ENCODE measurements at regions of chr1 and their contacts with region 1.

Region 1: DNA sequence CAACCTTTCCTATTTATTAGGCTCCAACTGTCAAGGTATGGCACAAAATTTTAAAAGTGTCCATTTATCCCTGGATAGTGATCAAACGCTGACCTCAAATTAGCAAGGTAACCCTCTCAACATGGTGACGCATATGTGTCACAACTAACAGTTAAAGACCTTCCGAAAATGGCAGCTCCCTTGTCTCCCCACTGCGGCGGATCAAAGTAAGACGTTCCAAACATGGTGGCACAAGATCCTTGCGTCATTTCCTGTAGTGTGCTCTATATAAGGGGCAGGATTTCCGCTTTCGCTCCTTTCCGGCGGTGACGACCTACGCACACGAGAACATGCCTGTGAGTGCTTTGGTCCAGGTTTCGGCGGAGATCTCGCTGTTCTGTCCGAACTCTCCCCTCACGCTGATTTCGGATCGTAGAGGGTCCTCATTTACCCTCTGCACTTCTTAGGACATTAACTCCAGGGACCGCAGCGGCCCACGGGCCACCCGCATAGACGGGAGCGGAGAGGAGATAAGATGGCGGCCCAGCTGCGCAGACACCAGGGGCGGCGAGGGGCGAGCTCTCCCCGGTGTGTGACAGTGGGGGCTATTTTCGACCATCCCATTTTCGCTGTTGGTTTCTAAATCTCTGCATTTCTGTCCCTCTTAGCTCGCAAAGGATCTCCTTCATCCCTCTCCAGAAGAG is at the start of gene RPS27:
- DNase-seq: peak; percentile 77 to 96 (median 92)
- H3K4me3 ChIP-seq: peak within 1 kb of the TSS; percentile 79
- H3K4me3 Mint-ChIP-seq: peak within 1 kb of the TSS; percentile 91 to 100 (median 97)
- H3K27ac ChIP-seq: peak within 1 kb of the TSS; percentile 96
- H3K27ac Mint-ChIP-seq: peak within 1 kb of the TSS; percentile 93 to 100 (median 100)
- H3K4me1 ChIP-seq: peaks cover 42% of the 10 kb centered on the region
- H3K4me1 Mint-ChIP-seq: peaks cover 36 to 61% (median 53%) of the 10 kb centered on the region in 3 donors
- H3K27me3 ChIP-seq: no peaks in the 10 kb centered on the region
- H3K27me3 Mint-ChIP-seq: peaks cover 8% of the 10 kb centered on the region in 2 donors
- total RNA-seq, gene RPS27: 1,959 to 2,149 TPM

Region 2: GRCh38 chr1:153805042-153805745 is 185.4 kb before region 1 on chr1:
- CTCF ChIA-PET with region 1: interaction called, 35 read pairs
- POLR2A ChIA-PET with region 1: interaction called, 4 read pairs
- DNase-seq: peak; percentile 50 to 92 (median 83)
- H3K4me3 ChIP-seq: no peak overlapping the region
- H3K4me3 Mint-ChIP-seq: peak overlapping the region; percentile 2 to 64 (median 41)
- H3K27ac ChIP-seq: peak overlapping the region; percentile 74
- H3K27ac Mint-ChIP-seq: peak overlapping the region; percentile 66 to 96 (median 86)
- H3K4me1 ChIP-seq: peaks cover 22% of the 10 kb centered on the region
- H3K4me1 Mint-ChIP-seq: peaks cover 40 to 50% (median 41%) of the 10 kb centered on the region in 3 donors
- H3K27me3 ChIP-seq: no peaks in the 10 kb centered on the region
- H3K27me3 Mint-ChIP-seq: no peaks in the 10 kb centered on the region

Region 3: GRCh38 chr1:153922972-153923925 is 67.4 kb before region 1 on chr1 and contains the start of gene GATAD2B:
- CTCF ChIA-PET with region 1: interaction called, 4 read pairs
- POLR2A ChIA-PET with region 1: interaction called, 23 read pairs
- DNase-seq: peak; percentile 97 to 100 (median 99)
- H3K4me3 ChIP-seq: peak within 1 kb of the TSS; percentile 98
- H3K4me3 Mint-ChIP-seq: peak within 1 kb of the TSS; percentile 79 to 97 (median 94)
- H3K27ac ChIP-seq: peak within 1 kb of the TSS; percentile 96
- H3K27ac Mint-ChIP-seq: peak within 1 kb of the TSS; percentile 95 to 100 (median 98)
- H3K4me1 ChIP-seq: peaks cover 44% of the 10 kb centered on the region
- H3K4me1 Mint-ChIP-seq: peaks cover 46 to 60% (median 52%) of the 10 kb centered on the region in 3 donors
- H3K27me3 ChIP-seq: no peaks in the 10 kb centered on the region
- H3K27me3 Mint-ChIP-seq: peaks cover 0 to 4% of the 10 kb centered on the region in 2 donors
- total RNA-seq, gene GATAD2B: 64.9 to 71.9 TPM

Region 4: GRCh38 chr1:153958111-153958960 is 32.3 kb before region 1 on chr1 and contains the start of gene CRTC2:
- CTCF ChIA-PET with region 1: interaction called, 6 read pairs
- POLR2A ChIA-PET with region 1: interaction called, 14 read pairs
- DNase-seq: peak; percentile 95 to 98 (median 95)
- H3K4me3 ChIP-seq: peak within 1 kb of the TSS; percentile 74
- H3K4me3 Mint-ChIP-seq: peak within 1 kb of the TSS; percentile 93 to 99 (median 98)
- H3K27ac ChIP-seq: peak within 1 kb of the TSS; percentile 78
- H3K27ac Mint-ChIP-seq: peak within 1 kb of the TSS; percentile 61 to 98 (median 98)
- H3K4me1 ChIP-seq: peaks cover 52% of the 10 kb centered on the region
- H3K4me1 Mint-ChIP-seq: peaks cover 51 to 70% (median 57%) of the 10 kb centered on the region in 3 donors
- H3K27me3 ChIP-seq: no peaks in the 10 kb centered on the region
- H3K27me3 Mint-ChIP-seq: no peaks in the 10 kb centered on the region
- total RNA-seq, gene CRTC2: 53.9 to 63.2 TPM

Region 5: GRCh38 chr1:153977250-153978240 is 13.1 kb before region 1 on chr1 and contains the start of gene JTB:
- CTCF ChIA-PET with region 1: interaction called, 40 read pairs
- POLR2A ChIA-PET with region 1: interaction called, 40 read pairs
- DNase-seq: peak; percentile 74 to 90 (median 81)
- H3K4me3 ChIP-seq: peak within 1 kb of the TSS; percentile 93
- H3K4me3 Mint-ChIP-seq: peak within 1 kb of the TSS; percentile 91 to 99 (median 98)
- H3K27ac ChIP-seq: peak within 1 kb of the TSS; percentile 88
- H3K27ac Mint-ChIP-seq: peak within 1 kb of the TSS; percentile 88 to 100 (median 96)
- H3K4me1 ChIP-seq: peaks cover 18% of the 10 kb centered on the region
- H3K4me1 Mint-ChIP-seq: peaks cover 28 to 39% (median 30%) of the 10 kb centered on the region in 3 donors
- H3K27me3 ChIP-seq: no peaks in the 10 kb centered on the region
- H3K27me3 Mint-ChIP-seq: peaks cover 0 to 1% of the 10 kb centered on the region in 2 donors
- total RNA-seq, gene JTB: 232 to 239 TPM